Ascending aorta (tissue), 2 donors: ENCODE measurements at regions of chr3 and their contacts with region 1.

Region 1: GRCh38 chr3:57692259-57693147 is at the start of gene DENND6A:
- DNase-seq: peak; percentile 79 to 91
- H3K4me3 ChIP-seq: peak within 1 kb of the TSS; percentile 78 to 87
- H3K27ac ChIP-seq: peak within 1 kb of the TSS; percentile 97 to 98
- H3K4me1 ChIP-seq: peaks cover 7 to 30% of the 10 kb centered on the region in 2 donors
- H3K27me3 ChIP-seq: no peaks in the 10 kb centered on the region
- CTCF ChIP-seq: no peak
- total RNA-seq, gene DENND6A: 11.6 TPM

Region 2: DNA sequence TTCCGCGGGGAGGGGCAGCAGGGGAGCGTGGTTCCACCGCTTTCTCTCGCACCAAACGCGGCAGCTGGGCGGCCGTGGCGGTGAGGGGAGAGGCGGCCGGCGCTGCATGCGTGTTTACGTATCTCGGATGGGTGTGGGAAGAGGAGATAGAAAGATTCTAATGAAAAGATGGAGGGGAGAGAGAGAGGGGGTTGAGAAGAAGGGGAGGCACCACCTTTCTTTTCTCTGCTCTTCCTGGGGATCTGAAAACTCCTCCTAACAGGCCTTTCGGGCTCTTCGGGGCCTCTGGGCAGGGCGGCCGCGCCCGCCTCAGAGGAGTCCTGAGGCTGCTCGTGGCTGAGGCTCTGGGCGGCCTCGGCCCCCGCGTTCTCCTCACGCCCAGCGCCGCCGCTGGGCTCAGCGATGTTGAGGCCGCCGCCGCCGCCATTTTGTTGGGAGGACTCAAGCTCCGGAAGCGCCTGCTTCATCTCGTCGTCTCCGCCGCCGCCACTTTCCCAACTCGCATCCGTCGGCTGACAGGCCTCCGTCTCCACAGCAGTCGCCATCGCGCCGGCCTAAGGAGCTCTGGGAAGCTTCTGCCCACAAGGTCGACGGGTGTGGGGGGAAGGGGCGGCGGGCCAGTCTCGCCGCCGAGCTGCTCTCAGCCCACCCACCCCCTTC is 1009.9 kb before region 1 on chr3:
- intact Hi-C with region 1: loop called (anchors 5 kb)
- DNase-seq: peak in 1 of 2 donors; percentile 82
- H3K4me3 ChIP-seq: peak overlapping the region; percentile 74 to 82
- H3K27ac ChIP-seq: peak overlapping the region; percentile 95 to 99
- H3K4me1 ChIP-seq: peaks cover 0 to 3% of the 10 kb centered on the region in 2 donors
- H3K27me3 ChIP-seq: no peaks in the 10 kb centered on the region
- CTCF ChIP-seq: no peak

Region 3: DNA sequence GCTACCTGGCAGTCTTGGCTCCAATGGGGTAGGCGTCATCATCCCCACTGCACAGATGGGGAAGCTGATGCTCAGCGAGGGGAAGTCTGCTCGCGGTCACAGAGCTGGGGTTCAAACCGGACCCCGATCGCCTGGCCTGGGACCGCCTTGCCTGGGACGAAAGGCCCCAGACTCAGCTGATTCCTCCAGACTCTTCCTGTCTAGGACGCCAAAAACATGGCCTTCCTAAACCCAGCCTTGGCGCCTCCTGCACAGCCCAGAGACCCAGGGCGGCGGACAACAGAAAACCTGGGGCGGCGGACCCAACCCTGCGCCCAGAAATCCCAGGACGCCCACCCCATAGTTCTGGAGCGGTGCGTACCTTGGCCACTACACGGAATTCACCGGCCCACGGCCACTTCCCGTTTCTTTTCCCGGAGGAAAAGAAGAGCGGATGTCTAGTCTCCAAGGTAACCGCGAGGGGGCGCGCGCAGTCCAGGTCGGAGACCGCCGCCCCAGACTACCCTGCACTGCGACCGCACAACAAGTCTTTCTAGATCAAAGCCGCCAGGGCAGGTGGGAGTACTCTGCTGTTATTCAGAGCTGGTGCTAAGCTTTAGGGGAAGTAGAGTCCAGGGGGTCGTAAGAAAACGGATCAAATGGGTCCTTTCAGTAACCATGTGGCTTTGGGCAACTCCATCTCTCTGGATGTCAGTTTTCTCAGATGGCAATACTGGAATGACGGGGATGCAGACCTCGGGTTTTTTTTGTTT is 522.5 kb before region 1 on chr3:
- intact Hi-C with region 1: loop called (anchors 10 kb)
- DNase-seq: peak in 1 of 2 donors; percentile 78
- H3K4me3 ChIP-seq: peak overlapping the region; percentile 52 to 65
- H3K27ac ChIP-seq: no peak overlapping the region
- H3K4me1 ChIP-seq: no peaks in the 10 kb centered on the region
- H3K27me3 ChIP-seq: no peaks in the 10 kb centered on the region
- CTCF ChIP-seq: peak; percentile 77 to 95 (median 91)

Region 4: GRCh38 chr3:57206423-57206822 is 486.1 kb before region 1 on chr3:
- intact Hi-C with region 1: no loop called
- DNase-seq: no peak
- H3K4me3 ChIP-seq: no peak overlapping the region
- H3K27ac ChIP-seq: no peak overlapping the region
- H3K4me1 ChIP-seq: no peaks in the 10 kb centered on the region
- H3K27me3 ChIP-seq: no peaks in the 10 kb centered on the region
- CTCF ChIP-seq: no peak

Region 5: DNA sequence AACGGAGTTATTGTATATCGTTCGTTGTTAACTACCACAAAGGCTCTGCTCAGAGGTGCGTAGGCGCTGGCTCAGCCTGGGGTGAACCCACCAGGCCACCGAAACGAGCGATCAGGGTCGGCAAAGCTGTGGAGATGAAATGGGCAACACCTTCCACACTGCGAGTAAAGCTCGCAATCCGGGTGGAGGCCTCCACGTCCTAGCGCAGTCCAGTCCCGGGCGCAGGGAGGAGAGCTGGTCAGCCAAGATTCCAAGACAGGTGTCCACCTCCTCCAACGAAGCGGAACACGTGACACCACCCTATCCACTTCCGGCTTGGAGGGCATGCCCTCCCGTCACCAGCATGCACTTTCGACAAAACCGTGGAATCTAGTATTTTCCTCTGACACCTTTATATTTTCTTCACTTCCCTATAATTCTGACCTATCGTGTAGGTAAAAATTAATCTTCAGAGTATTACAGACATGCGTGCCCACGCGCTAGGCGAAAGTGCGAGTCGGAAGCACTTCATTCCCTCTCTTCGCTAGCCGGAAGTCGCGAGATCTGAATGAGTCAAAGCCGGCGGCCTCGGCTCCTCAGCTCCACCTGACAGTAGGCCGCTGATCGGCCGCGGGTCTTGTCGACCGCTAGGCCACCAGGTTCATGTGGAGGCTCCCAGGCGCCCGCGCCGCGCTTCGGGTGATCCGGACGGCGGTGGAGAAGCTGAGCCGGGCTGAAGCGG is 136.6 kb before region 1 on chr3 and contains the start of gene PDE12:
- intact Hi-C with region 1: loop called (anchors 2 kb)
- DNase-seq: peak; percentile 49 to 95
- H3K4me3 ChIP-seq: peak within 1 kb of the TSS; percentile 90
- H3K27ac ChIP-seq: peak within 1 kb of the TSS; percentile 88 to 90
- H3K4me1 ChIP-seq: peaks cover 3 to 18% of the 10 kb centered on the region in 2 donors
- H3K27me3 ChIP-seq: no peaks in the 10 kb centered on the region
- CTCF ChIP-seq: no peak
- total RNA-seq, gene PDE12: 3.0 TPM

Region 6: DNA sequence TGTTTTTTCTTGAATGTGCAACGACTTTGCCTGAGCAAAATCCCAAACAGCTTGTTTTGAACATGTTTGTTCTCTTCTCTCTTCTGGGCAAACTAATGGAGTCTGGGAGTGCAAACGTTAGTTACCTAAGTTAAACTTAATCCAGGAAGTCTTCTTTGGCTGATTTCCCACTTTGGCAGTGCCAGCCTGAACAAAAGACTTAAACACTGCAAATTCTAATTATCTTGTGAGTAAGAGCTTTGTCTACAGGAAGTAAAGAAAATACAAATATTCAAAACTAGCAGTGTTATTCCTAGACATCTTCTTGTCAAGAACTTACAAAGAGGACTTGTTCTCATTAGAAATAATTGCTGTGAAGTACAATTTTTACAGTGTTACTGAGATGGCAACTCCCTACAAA is 17.1 kb after region 1 on chr3:
- intact Hi-C with region 1: no loop called
- DNase-seq: no peak
- H3K4me3 ChIP-seq: no peak overlapping the region
- H3K27ac ChIP-seq: peak overlapping the region; percentile 8 to 11
- H3K4me1 ChIP-seq: peaks cover 0 to 2% of the 10 kb centered on the region in 2 donors
- H3K27me3 ChIP-seq: no peaks in the 10 kb centered on the region
- CTCF ChIP-seq: no peak

Region 7: GRCh38 chr3:57755668-57756527 is 63.4 kb after region 1 on chr3 and contains the start of gene SLMAP:
- intact Hi-C with region 1: loop called (anchors 1 kb)
- DNase-seq: peak; percentile 92 to 98
- H3K4me3 ChIP-seq: peak within 1 kb of the TSS; percentile 89 to 90
- H3K27ac ChIP-seq: peak within 1 kb of the TSS; percentile 87
- H3K4me1 ChIP-seq: peaks cover 16 to 19% of the 10 kb centered on the region in 2 donors
- H3K27me3 ChIP-seq: no peaks in the 10 kb centered on the region
- CTCF ChIP-seq: no peak
- total RNA-seq, gene SLMAP: 502 TPM